ENCODE measurements at regions of chr3 and their contacts with region 1.

Region 1: DNA sequence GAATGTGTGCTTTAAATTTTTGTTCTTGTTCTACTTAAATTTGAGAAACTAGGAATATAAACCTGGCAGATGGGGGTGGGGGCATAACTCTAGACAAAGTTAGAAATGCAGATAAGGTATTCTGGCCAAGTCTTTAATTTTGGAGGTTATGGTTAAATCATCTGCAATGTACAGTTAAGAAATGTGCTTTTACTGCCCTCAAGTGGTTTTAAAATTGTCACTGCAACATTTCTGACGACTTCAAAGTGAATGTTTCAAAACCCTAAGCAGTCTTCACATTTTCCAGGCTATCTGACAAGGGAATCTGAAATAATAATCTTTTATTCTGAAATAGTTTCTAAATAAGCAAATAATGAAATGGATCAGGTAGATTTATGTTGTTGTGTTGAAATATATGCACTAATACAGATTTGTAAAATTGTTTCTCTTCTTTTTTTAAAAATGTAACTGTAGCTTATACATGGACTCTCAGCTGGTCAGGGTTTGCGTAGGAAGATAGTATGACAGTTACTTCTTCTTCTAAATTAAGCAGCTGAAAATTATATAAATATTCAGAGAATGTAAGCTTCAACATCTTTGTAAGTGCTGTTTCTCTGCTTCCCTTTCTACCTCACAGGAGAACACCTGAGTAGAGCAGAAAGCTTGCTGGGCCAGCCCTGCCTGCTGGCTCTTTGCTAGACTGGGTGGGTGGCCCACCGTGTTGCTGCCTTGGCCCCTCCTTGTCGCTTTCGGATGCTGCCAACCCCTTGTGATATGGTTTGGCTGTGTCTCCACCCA is 45.0 kb downstream of the SUCNR1 start:
- DNase-seq: no peak
- H3K4me3 Mint-ChIP-seq: no peak overlapping the region
- H3K27ac Mint-ChIP-seq: no peak overlapping the region
- H3K4me1 Mint-ChIP-seq: no peaks in the 10 kb centered on the region
- H3K27me3 Mint-ChIP-seq: peaks cover 5% of the 10 kb centered on the region

Region 2: GRCh38 chr3:151468284-151468917 is 450.0 kb before region 1 on chr3:
- CTCF ChIA-PET with region 1: interaction called, 10 read pairs
- DNase-seq: peak; percentile 36
- H3K4me3 Mint-ChIP-seq: no peak overlapping the region
- H3K27ac Mint-ChIP-seq: no peak overlapping the region
- H3K4me1 Mint-ChIP-seq: no peaks in the 10 kb centered on the region
- H3K27me3 Mint-ChIP-seq: no peaks in the 10 kb centered on the region

Region 3: GRCh38 chr3:151838583-151839312 is 79.7 kb before region 1 on chr3:
- CTCF ChIA-PET with region 1: interaction called, 18 read pairs
- DNase-seq: peak; percentile 47
- H3K4me3 Mint-ChIP-seq: no peak overlapping the region
- H3K27ac Mint-ChIP-seq: no peak overlapping the region
- H3K4me1 Mint-ChIP-seq: no peaks in the 10 kb centered on the region
- H3K27me3 Mint-ChIP-seq: peaks cover 28% of the 10 kb centered on the region

Measured in activated naive CD4-positive, alpha-beta T cell treated with anti-CD3 and anti-CD28 coated beads, Interleukin-2, amount 10 ng/mL, durations not matched to agents 7 days and 5 days (primary cell).